Activated CD4-positive, alpha-beta T cell treated with anti-CD3 and anti-CD28 coated beads, Interleukin-2, amount 10 ng/mL, durations not matched to agents 24 days and 14 days (primary cell): ENCODE measurements at regions of chr16 and their contacts with region 1.

Region 1: DNA sequence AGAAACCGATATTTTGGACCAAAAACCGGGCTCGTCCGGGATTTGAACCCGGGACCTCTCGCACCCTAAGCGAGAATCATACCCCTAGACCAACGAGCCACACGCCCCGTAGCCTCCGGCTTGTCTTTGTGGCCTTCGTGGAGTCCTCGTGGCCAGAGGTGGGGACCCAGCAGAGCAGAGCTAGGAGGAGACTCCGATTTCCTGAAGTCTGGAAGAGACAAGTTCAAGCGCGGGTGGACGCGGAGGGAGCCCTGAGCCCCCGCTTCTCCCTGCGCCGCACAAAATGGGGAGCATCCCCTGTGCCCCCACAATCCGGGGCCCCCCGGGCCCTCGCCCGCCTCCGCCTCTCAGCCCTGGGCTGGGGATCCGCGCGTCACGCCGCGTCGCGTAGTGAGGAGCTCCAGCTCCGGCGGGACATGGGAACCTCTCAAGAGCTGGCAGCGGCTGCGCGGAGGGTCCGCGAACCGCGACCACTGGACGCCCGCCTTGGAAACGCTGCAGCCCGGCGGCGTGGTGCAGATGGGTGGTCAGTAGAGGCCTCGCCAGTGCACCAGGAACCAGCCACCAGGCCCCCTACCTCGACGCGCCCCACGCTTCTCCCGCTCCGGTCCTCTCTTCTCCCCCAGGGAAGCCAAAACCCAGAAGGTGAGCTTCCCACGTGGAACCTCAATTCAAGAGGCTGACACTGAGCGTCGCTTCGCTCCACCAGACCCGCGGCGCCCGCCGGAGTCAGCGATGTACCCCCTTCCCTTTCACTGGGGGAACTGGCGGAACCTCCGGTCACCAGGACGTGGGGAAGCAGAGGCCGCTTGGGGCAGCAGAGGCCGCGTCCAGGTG is 5.2 kb upstream of the OR1F1 start:
- DNase-seq: peak; percentile 81
- H3K4me3 Mint-ChIP-seq: peak overlapping the region; percentile 79
- H3K27ac Mint-ChIP-seq: peak overlapping the region; percentile 88
- H3K4me1 Mint-ChIP-seq: peaks cover 17% of the 10 kb centered on the region
- H3K27me3 Mint-ChIP-seq: peaks cover 65% of the 10 kb centered on the region

Region 2: GRCh38 chr16:3161136-3162018 is 21.4 kb before region 1 on chr16:
- intact Hi-C with region 1: no loop called
- DNase-seq: no peak
- H3K4me3 Mint-ChIP-seq: peak overlapping the region; percentile 35
- H3K27ac Mint-ChIP-seq: no peak overlapping the region
- H3K4me1 Mint-ChIP-seq: peaks cover 31% of the 10 kb centered on the region
- H3K27me3 Mint-ChIP-seq: peaks cover 15% of the 10 kb centered on the region

Region 3: GRCh38 chr16:3171855-3172593 is 10.8 kb before region 1 on chr16:
- intact Hi-C with region 1: loop called (anchors 1 kb)
- DNase-seq: peak; percentile 76
- H3K4me3 Mint-ChIP-seq: peak overlapping the region; percentile 80
- H3K27ac Mint-ChIP-seq: peak overlapping the region; percentile 83
- H3K4me1 Mint-ChIP-seq: peaks cover 34% of the 10 kb centered on the region
- H3K27me3 Mint-ChIP-seq: peaks cover 67% of the 10 kb centered on the region

Region 4: GRCh38 chr16:3195975-3196374 is 13.1 kb after region 1 on chr16:
- intact Hi-C with region 1: no loop called
- DNase-seq: no peak
- H3K4me3 Mint-ChIP-seq: no peak overlapping the region
- H3K27ac Mint-ChIP-seq: no peak overlapping the region
- H3K4me1 Mint-ChIP-seq: peaks cover 7% of the 10 kb centered on the region
- H3K27me3 Mint-ChIP-seq: peaks cover 16% of the 10 kb centered on the region